Posterior vena cava (tissue), 2 donors: ENCODE measurements at regions of chr3 and their contacts with region 1.

Region 1: DNA sequence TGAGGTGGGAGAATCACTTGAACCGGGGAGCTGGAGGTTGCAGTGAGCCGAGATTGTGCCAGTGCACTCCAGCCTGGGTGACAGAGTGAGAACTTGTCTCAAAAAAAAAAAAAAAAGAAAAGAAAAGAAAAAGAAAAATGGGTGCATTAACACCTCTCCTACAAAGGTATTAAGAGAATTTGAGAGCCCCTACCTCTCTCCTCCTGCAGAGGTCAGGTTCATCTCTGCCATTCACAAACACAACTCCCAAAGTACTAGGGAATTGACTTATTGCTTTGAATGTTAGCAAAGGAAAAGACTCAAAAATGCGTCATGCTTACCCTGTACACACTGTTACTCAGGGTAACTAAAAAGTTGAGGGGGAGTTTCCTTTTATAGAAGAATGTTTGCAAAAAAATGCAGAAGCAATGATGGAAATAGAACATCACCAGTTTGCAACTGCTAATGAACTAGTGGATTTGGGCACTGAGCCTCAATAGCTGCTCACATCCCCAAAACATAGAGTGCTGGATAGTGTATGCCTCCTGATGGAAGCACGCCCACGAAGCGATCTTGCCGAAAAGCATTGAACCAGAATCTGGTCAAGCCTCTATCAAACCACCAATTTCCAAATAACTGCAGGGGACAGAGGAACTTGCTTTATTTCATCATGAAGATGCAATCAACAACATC is 15.5 kb upstream of the LYZL4 start:
- DNase-seq: no peak

Region 2: DNA sequence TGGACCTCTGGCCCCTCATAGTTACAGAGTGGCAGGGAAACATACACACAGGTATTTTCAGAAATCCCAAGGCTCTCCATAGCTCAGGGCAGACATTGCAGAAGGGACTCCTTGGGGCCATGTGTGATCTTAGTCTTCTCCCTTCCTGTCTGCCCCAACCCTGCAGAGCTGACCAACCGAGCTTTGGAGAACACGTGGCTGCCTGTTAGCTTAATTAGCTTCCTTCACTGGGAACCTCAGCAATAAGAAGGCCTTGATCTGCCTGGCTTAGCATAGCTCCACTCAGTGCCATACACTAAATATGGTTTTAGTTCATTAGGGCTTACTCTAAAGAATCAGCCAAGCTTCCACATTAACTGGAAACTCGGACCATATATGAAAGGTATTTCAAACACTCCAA is 27.8 kb before region 1 on chr3:
- intact Hi-C with region 1: loop called in 1 of 2 experiments (anchors 2 kb)
- DNase-seq: no peak